ENCODE measurements at regions of chrX and their contacts with region 1.

Region 1: GRCh38 chrX:50920132-50920531 is 9.6 kb downstream of the BMP15 start:
- DNase-seq: peak; percentile 10
- H3K4me3 Mint-ChIP-seq: no peak overlapping the region
- H3K27ac Mint-ChIP-seq: no peak overlapping the region
- H3K4me1 Mint-ChIP-seq: no peaks in the 10 kb centered on the region
- H3K27me3 Mint-ChIP-seq: peaks cover 12% of the 10 kb centered on the region
- CTCF ChIP-seq: no peak

Region 2: DNA sequence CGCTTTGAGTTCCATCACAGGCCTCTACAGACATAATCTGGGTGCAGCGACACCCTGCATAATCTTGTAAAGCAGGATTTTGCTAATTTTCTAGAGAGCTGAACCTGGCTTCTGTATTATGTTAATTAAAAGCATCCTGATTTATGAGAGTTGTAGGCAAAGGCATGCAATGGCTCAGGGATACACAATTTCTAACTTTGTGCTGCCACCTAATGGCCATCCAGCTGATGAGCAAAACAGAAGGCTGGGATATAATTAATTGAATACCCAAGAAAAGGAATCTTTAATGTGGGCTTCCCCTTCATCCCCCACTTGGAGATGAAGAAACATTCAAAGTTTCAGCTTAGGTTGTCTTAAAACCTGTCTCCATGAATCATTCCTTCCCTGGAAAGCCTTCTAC is 68.5 kb after region 1 on chrX:
- CTCF ChIA-PET with region 1: no interaction called
- intact Hi-C with region 1: loop called (anchors 5 kb)
- DNase-seq: peak; percentile 29
- H3K4me3 Mint-ChIP-seq: no peak overlapping the region
- H3K27ac Mint-ChIP-seq: no peak overlapping the region
- H3K4me1 Mint-ChIP-seq: no peaks in the 10 kb centered on the region
- H3K27me3 Mint-ChIP-seq: peaks cover 26% of the 10 kb centered on the region
- CTCF ChIP-seq: no peak

Region 3: DNA sequence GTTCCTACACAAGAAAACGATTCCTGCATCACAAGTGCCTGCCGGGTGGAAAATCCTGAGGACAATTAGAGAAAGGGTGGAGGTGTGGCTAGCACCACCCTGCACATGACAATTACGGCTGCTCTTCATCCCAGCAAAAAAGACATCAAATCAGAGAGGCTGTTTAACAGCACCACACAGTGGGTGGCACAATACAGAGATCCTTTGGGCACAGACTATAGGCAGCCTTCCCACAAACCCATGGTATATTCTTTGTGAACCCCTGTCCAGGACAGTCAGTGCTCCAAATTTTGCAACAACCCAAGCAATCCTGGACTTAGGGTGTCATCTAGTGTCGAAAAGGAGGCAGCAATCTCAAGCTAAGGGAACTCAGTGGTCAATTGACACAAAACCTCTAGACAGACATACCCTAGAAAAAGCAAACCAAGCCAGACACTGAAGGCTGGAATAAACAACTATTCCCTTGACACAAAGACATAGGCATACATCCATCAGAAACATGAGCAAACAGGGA is 127.8 kb after region 1 on chrX:
- CTCF ChIA-PET with region 1: no interaction called
- intact Hi-C with region 1: no loop called
- DNase-seq: no peak
- H3K4me3 Mint-ChIP-seq: no peak overlapping the region
- H3K27ac Mint-ChIP-seq: no peak overlapping the region
- H3K4me1 Mint-ChIP-seq: no peaks in the 10 kb centered on the region
- H3K27me3 Mint-ChIP-seq: peaks cover 61% of the 10 kb centered on the region
- CTCF ChIP-seq: no peak

Measured in Calu3 (cell line).